Right cardiac atrium (tissue), 5 donors: ENCODE measurements at regions of chr2 and their contacts with region 1.

Region 1: DNA sequence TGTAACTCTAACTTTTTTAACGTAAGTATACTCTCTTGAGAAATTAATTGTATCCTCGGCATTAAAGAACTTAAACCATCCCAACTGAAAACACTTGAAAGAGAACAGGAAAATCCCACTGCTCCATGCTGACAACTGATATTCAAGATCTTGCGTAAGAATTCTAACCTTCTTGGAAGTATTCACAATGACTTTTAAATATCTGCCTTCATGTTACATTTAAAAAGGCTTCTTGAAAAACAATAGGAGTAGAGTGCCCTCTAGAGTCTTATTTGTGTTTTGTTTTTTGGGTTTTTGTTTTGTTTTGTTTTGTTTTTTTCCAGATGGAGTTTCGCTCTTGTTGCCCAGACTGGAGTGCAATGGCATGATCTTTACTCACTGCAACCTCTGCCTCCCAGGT is 65.4 kb upstream of the DNAJC10 start:
- DNase-seq: no peak
- ATAC-seq: peak; percentile 62 to 65
- H3K4me3 ChIP-seq: no peak overlapping the region
- H3K27ac ChIP-seq: no peak overlapping the region
- H3K4me1 ChIP-seq: no peaks in the 10 kb centered on the region
- H3K27me3 ChIP-seq: no peaks in the 10 kb centered on the region

Region 2: GRCh38 chr2:182186132-182186735 is 464.5 kb before region 1 on chr2:
- intact Hi-C with region 1: loop called (anchors 2 to 5 kb)
- DNase-seq: no peak
- ATAC-seq: peak in 1 of 2 donors; percentile 58
- H3K4me3 ChIP-seq: no peak overlapping the region
- H3K27ac ChIP-seq: no peak overlapping the region
- H3K4me1 ChIP-seq: peaks cover 1% of the 10 kb centered on the region
- H3K27me3 ChIP-seq: no peaks in the 10 kb centered on the region

Region 3: DNA sequence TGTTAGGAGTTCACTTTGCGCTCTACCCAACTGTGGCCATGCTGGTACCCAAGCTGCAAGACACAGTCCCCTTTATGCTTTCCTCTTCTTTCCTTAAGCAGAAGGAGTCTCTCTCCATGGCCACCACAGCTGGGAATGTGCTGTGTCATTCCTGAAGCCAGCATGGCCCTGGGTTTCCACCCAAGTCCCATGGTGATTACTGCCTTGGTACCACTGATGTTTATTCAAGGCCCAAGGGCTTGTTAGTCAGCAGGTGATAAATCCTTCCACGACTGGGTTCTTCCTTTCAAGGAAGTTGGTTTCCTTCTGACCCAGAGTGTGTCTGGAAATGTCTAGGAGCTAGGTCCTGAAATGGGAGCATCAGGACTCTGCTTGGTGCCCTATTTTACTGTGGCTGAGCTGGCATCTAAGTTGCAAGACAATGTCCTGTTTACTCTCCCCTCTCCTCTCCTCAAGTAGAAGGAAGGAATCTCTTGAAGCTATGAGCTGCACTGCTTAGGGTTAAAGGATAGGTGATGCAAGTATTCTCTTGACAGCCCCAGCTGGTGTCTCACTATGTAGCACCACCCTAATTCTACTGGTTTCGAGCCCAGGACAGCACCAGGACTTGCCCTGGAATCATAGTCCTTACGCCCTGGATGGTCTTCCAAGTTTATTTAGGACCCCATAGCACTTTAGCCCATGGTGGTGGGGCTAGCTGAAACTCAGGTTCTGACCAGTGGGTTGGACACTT is 454.9 kb after region 1 on chr2:
- intact Hi-C with region 1: no loop called
- DNase-seq: no peak
- ATAC-seq: no peak
- H3K4me3 ChIP-seq: no peak overlapping the region
- H3K27ac ChIP-seq: no peak overlapping the region
- H3K4me1 ChIP-seq: no peaks in the 10 kb centered on the region
- H3K27me3 ChIP-seq: no peaks in the 10 kb centered on the region